ENCODE measurements at regions of chr1 and their contacts with region 1.

Region 1: GRCh38 chr1:223386013-223386412 is 7.2 kb upstream of the CCDC185 start:
- DNase-seq: no peak
- ATAC-seq: no peak
- H3K4me3 ChIP-seq: no peak overlapping the region
- H3K27ac ChIP-seq: no peak overlapping the region
- H3K4me1 ChIP-seq: no peaks in the 10 kb centered on the region
- H3K27me3 ChIP-seq: peaks cover 15% of the 10 kb centered on the region
- CTCF ChIP-seq: no peak

Region 2: GRCh38 chr1:223142795-223143536 is 243.0 kb before region 1 on chr1 and contains the start of gene TLR5:
- CTCF ChIA-PET with region 1: no interaction called
- POLR2A ChIA-PET with region 1: no interaction called
- in situ Hi-C with region 1: no loop called
- intact Hi-C with region 1: loop called (anchors 10 kb)
- DNase-seq: no peak
- ATAC-seq: peak; percentile 93
- H3K4me3 ChIP-seq: peak within 1 kb of the TSS; percentile 51 to 62
- H3K27ac ChIP-seq: 0 out of 2 replicates have a peak within 1 kb of the TSS, but pooled peaks have one; percentile 39
- H3K4me1 ChIP-seq: peaks cover 5% of the 10 kb centered on the region; the same call in 1 of the 2 replicates
- H3K27me3 ChIP-seq: peaks cover 4% of the 10 kb centered on the region
- CTCF ChIP-seq: peak; percentile 93
- total RNA-seq, gene TLR5: 0.21 TPM